ENCODE measurements at regions of chr12 and their contacts with region 1.

Region 1: DNA sequence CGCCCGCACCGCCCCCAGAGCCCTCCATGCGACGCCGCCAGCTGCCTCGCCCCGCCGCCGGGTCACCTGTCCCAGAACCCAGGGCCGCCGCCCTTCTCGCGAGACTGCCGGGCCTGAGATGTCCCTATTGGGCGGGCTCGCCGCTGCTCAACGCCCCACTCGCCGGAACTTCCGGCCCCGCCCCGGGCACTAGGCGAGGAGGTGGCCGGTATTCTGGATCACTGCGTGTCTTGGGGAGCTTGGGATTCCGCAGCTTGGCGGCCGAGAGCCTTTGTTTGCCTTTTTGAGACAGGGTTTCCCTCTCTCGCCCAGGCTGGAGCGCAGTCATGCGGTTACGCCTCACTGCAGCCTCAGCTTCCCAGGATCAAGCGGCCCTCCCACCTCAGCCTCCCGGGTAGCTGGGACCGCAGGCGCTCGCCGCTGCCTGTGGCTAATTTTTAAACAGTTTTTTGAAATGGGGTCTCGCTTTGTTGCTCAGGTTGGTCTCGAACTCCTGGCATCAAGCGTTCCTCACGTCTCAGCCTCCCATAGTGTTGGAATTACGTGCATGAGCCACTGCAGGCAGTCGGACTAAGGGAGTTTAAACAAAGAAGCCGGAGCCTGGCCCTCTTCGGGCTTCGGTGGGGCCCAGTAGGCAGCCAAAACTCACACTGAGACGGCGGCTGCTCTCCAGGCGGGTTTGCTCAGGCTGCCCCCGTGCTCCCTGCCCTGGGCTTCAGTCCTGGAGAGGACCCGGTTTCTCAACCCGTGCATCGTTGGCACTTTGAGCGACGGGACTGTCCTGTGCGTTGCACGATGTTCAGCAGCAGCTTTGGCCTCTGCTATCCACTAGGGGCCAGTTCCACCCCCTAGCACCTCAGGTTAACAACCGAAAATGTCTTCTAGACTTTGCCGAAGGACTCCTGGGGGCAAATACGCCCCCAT is at the start of gene SLC15A4:
- DNase-seq: peak; percentile 88 to 91 (median 89)
- H3K4me3 ChIP-seq: peak within 1 kb of the TSS; percentile 60 to 82 (median 71)
- H3K4me3 Mint-ChIP-seq: peak within 1 kb of the TSS; percentile 86 to 90
- H3K27ac ChIP-seq: peak within 1 kb of the TSS; percentile 85 to 91
- H3K27ac Mint-ChIP-seq: peak within 1 kb of the TSS; percentile 86 to 96 (median 93)
- H3K4me1 ChIP-seq: peaks cover 59 to 60% of the 10 kb centered on the region in 2 donors
- H3K4me1 Mint-ChIP-seq: peaks cover 49% of the 10 kb centered on the region
- H3K27me3 ChIP-seq: no peaks in the 10 kb centered on the region
- H3K27me3 Mint-ChIP-seq: peaks cover 0 to 2% (median 1%) of the 10 kb centered on the region in 3 donors
- CTCF ChIP-seq: no peak
- polyA plus RNA-seq, gene SLC15A4: 5.4 to 46.6 (median 14.8) TPM

Region 2: DNA sequence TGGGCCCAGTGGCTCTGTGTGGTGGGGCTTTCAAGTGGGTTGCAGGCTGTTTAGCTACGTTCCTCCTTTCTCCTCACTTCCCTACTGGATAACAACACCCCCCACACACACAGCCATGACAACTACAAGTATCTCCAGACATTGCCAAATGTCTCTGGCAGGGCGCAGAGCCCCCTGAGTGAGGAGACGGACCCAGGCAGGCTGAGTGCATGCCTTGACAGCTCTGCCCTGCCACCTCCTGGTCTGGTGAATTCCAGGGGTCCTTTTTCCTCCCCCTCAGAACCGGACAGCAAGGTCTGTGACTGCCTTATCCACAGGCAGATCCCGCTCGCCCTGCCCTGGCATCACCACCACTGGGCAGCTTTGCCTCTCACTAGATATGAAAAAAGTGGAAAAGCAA is 280.7 kb before region 1 on chr12:
- intact Hi-C with region 1: no loop called
- DNase-seq: no peak
- H3K4me3 ChIP-seq: no peak overlapping the region
- H3K4me3 Mint-ChIP-seq: no peak overlapping the region
- H3K27ac ChIP-seq: no peak overlapping the region
- H3K27ac Mint-ChIP-seq: peak overlapping the region in 1 of 7 donors; percentile 10
- H3K4me1 ChIP-seq: no peaks in the 10 kb centered on the region
- H3K4me1 Mint-ChIP-seq: no peaks in the 10 kb centered on the region
- H3K27me3 ChIP-seq: no peaks in the 10 kb centered on the region
- H3K27me3 Mint-ChIP-seq: peaks cover 0 to 6% (median 2%) of the 10 kb centered on the region in 3 donors
- CTCF ChIP-seq: no peak

Region 3: DNA sequence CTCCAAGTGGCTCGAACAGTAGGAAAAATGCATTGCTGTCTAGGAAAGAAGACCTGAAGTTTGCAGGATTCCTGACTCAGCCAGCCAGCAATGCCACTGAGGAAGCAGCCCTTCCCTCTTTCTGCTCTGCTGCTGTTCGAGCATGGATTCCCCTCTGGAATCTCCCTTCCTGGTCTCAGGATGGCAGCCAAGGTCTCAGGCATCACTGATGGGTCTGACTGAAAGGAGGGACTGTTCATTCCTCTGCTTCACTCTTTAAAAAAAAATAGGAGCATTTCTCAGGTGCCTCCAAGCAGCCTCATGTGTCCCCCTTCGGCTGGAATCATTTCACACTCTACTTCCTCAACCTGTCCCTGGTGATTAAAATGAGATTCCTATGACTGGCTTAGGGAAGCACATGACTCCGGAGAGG is 62.8 kb before region 1 on chr12:
- intact Hi-C with region 1: no loop called
- DNase-seq: no peak
- H3K4me3 ChIP-seq: no peak overlapping the region
- H3K4me3 Mint-ChIP-seq: no peak overlapping the region
- H3K27ac ChIP-seq: no peak overlapping the region
- H3K27ac Mint-ChIP-seq: no peak overlapping the region
- H3K4me1 ChIP-seq: no peaks in the 10 kb centered on the region
- H3K4me1 Mint-ChIP-seq: no peaks in the 10 kb centered on the region
- H3K27me3 ChIP-seq: peaks cover 0 to under 1% of the 10 kb centered on the region in 2 donors
- H3K27me3 Mint-ChIP-seq: peaks cover 10 to 27% (median 13%) of the 10 kb centered on the region in 3 donors
- CTCF ChIP-seq: no peak

Region 4: GRCh38 chr12:128771681-128772080 is 52.5 kb before region 1 on chr12:
- intact Hi-C with region 1: loop called in 1 of 2 experiments (anchors 5 kb)
- DNase-seq: peak; percentile 69 to 91 (median 77)
- H3K4me3 ChIP-seq: peak overlapping the region in 1 of 3 experiments; percentile 20
- H3K4me3 Mint-ChIP-seq: peak overlapping the region in 1 of 2 donors; percentile 32
- H3K27ac ChIP-seq: peak overlapping the region; percentile 68 to 88
- H3K27ac Mint-ChIP-seq: peak overlapping the region; percentile 86 to 98 (median 94)
- H3K4me1 ChIP-seq: peaks cover 34 to 41% of the 10 kb centered on the region in 2 donors
- H3K4me1 Mint-ChIP-seq: peaks cover 43% of the 10 kb centered on the region
- H3K27me3 ChIP-seq: peaks cover 2 to 17% of the 10 kb centered on the region in 2 donors
- H3K27me3 Mint-ChIP-seq: peaks cover 7 to 17% (median 16%) of the 10 kb centered on the region in 3 donors
- CTCF ChIP-seq: no peak

Region 5: DNA sequence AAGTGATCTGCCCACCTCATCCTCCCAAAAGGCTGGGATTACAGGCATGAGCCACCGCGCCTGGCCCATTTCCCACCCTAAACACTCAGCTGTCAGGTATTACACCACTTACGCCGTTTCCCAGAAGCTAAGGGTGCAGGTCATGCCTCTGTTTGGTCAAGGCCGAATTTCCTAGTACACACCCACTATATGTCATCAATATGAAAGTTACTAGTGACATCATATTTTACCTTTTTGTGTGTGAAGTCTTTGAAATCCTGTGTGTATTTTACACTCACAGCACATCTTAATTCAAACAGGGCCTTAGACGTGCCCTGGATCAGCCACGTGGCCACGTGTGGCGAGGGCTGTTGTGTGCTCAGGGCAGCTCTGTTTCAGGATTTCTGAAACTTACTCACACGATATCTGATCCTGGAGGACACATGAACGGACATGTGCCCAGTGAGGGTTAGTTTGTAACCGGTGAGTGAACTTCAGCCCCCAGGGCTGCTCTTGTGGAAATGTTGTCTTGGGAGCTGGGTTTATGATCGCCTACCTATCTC is 80.9 kb after region 1 on chr12:
- intact Hi-C with region 1: no loop called
- DNase-seq: no peak
- H3K4me3 ChIP-seq: no peak overlapping the region
- H3K4me3 Mint-ChIP-seq: no peak overlapping the region
- H3K27ac ChIP-seq: no peak overlapping the region
- H3K27ac Mint-ChIP-seq: no peak overlapping the region
- H3K4me1 ChIP-seq: no peaks in the 10 kb centered on the region
- H3K4me1 Mint-ChIP-seq: no peaks in the 10 kb centered on the region
- H3K27me3 ChIP-seq: no peaks in the 10 kb centered on the region
- H3K27me3 Mint-ChIP-seq: peaks cover 0 to 5% (median 4%) of the 10 kb centered on the region in 3 donors
- CTCF ChIP-seq: no peak